AG04450 (cell line): ENCODE measurements at regions of chr6 and their contacts with region 1.

Region 1: DNA sequence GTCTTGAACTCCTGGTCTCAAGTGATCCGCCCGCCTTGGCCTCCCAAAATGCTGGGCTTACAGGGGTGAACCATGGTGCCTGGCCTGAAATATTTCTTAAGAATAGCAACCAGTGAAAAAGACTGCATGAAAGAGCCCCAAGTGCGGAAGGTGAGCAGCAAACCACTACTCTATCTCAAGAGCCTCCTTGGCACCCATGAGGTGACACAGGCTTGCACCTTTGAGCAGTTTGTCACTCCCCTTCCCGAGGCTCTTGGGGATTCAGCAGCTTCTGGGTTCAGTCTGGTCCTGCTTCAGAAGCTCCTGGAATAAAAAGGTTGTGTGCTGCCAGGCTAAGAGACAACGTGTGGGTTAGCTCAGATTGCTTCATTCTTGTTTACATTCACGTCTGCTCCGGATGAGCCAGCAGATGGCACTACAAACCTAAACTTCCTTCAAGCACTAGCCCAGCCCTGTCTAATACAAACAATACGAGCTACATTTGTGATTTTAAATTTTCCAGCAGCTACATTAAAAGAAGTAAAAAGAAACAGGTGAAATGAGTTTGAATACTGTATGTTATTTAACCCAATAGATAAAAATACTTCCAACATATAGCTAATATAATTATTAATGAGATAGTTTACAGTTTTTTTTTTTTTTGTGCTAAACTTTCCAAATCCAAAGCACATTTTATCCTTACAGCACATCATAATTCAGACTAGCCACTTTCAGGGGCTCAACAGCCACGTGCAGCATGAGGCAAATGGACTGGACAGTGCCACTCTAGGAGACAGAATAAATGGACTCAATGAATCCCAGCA is 46.2 kb downstream of the GJA10 start:
- DNase-seq: peak; percentile 77
- H3K4me3 ChIP-seq: no peak overlapping the region
- H3K27ac ChIP-seq: no peak overlapping the region
- H3K27me3 ChIP-seq: no peaks in the 10 kb centered on the region
- CTCF ChIP-seq: peak; percentile 81

Region 2: GRCh38 chr6:89894169-89894568 is 46.3 kb before region 1 on chr6 and contains the start of gene GJA10:
- CTCF ChIA-PET with region 1: no interaction called
- POLR2A ChIA-PET with region 1: no interaction called
- DNase-seq: no peak
- H3K4me3 ChIP-seq: no peak within 1 kb of the TSS
- H3K27ac ChIP-seq: no peak within 1 kb of the TSS
- H3K27me3 ChIP-seq: peaks cover 5% of the 10 kb centered on the region
- CTCF ChIP-seq: no peak
- polyA plus RNA-seq, gene GJA10: not detected in 2 replicates

Region 3: GRCh38 chr6:89952686-89953085 is 12.3 kb after region 1 on chr6:
- CTCF ChIA-PET with region 1: interaction called, 15 read pairs
- POLR2A ChIA-PET with region 1: no interaction called
- DNase-seq: peak; percentile 24
- H3K4me3 ChIP-seq: no peak overlapping the region
- H3K27ac ChIP-seq: no peak overlapping the region
- H3K27me3 ChIP-seq: no peaks in the 10 kb centered on the region
- CTCF ChIP-seq: no peak

Region 4: GRCh38 chr6:89984926-89985750 is 44.7 kb after region 1 on chr6:
- CTCF ChIA-PET with region 1: interaction called, 15 read pairs
- POLR2A ChIA-PET with region 1: no interaction called
- DNase-seq: no peak
- H3K4me3 ChIP-seq: no peak overlapping the region
- H3K27ac ChIP-seq: peak overlapping the region; percentile 94
- H3K27me3 ChIP-seq: no peaks in the 10 kb centered on the region
- CTCF ChIP-seq: no peak

Region 5: GRCh38 chr6:90285611-90286381 is 345.4 kb after region 1 on chr6:
- CTCF ChIA-PET with region 1: interaction called, 20 read pairs
- POLR2A ChIA-PET with region 1: no interaction called
- DNase-seq: peak; percentile 77
- H3K4me3 ChIP-seq: peak overlapping the region; percentile 53
- H3K27ac ChIP-seq: peak overlapping the region; percentile 59
- H3K27me3 ChIP-seq: no peaks in the 10 kb centered on the region
- CTCF ChIP-seq: no peak

Region 6: GRCh38 chr6:90393232-90393884 is 452.9 kb after region 1 on chr6:
- CTCF ChIA-PET with region 1: interaction called, 70 read pairs
- POLR2A ChIA-PET with region 1: interaction called, 3 read pairs
- DNase-seq: peak; percentile 32
- H3K4me3 ChIP-seq: no peak overlapping the region
- H3K27ac ChIP-seq: no peak overlapping the region
- H3K27me3 ChIP-seq: peaks cover 10% of the 10 kb centered on the region
- CTCF ChIP-seq: peak; percentile 87

Region 7: DNA sequence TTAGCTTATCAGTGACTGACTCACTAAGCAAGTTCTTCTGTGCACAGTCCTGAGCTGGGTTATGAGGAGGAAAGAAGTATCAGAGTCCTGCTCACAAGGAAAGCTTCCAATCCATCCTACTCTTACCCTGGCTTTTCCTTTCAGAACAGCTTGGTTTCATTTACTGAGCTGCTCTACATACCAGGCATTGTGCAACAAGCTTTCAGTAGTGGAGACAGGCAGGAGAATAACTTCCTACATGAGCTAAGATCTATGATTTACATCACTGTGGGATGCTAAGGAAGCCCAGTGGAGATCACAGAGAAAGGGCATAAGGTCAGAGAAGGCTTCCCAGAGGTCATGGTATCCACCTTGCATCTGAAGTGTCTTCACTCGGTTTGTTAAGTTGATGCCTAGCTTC is 501.9 kb after region 1 on chr6:
- CTCF ChIA-PET with region 1: interaction called, 11 read pairs
- POLR2A ChIA-PET with region 1: no interaction called
- DNase-seq: no peak
- H3K4me3 ChIP-seq: no peak overlapping the region
- H3K27ac ChIP-seq: no peak overlapping the region
- H3K27me3 ChIP-seq: peaks cover 18% of the 10 kb centered on the region
- CTCF ChIP-seq: no peak

Region 8: DNA sequence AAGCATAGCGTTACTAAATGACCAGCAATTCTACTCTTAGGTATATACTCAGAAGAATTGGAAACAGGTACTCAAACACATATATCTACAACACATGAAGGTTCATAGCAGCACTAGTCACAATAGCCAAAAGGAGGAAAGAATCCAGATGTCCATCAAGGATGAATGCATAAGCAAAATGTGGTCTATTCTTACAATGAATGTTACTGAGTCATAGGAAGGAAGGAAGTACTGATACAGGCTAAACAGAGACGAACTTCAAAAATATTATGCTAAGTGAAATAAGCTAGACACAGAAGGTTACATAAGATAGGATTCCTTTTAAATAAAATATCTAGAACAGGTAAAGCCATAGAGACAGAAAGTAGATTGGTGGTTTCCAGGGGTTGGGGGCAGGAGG is 552.9 kb after region 1 on chr6:
- CTCF ChIA-PET with region 1: interaction called, 15 read pairs
- POLR2A ChIA-PET with region 1: no interaction called
- DNase-seq: no peak
- H3K4me3 ChIP-seq: no peak overlapping the region
- H3K27ac ChIP-seq: no peak overlapping the region
- H3K27me3 ChIP-seq: peaks cover 4% of the 10 kb centered on the region
- CTCF ChIP-seq: no peak

Region 9: DNA sequence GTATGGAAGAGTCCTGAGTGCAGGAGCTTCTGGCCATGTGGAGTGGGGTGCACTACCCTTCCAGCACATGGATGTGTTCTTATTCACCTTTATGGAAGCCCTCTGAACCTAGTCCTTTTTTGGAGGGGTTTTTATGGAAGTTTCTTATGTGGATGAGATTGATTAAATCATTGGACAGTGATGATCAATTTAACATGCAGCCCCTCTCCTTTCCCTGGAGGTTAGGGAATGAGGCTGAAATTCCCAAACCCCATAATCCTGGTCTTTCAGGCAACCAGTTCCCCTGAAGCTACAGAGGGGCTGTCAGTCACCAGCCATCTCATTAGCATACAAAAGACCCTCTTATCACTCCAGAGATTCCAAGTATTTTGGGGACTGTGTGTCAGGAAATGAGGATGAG is 830.4 kb after region 1 on chr6:
- CTCF ChIA-PET with region 1: no interaction called
- POLR2A ChIA-PET with region 1: no interaction called
- DNase-seq: no peak
- H3K4me3 ChIP-seq: no peak overlapping the region
- H3K27ac ChIP-seq: no peak overlapping the region
- H3K27me3 ChIP-seq: no peaks in the 10 kb centered on the region
- CTCF ChIP-seq: no peak